ENCODE measurements at regions of chr2 and their contacts with region 1.

Region 1: GRCh38 chr2:219160186-219161017 is at the start of gene NHEJ1:
- DNase-seq: peak; percentile 96
- ATAC-seq: peak; percentile 87
- H3K4me3 Mint-ChIP-seq: peak within 1 kb of the TSS; percentile 80
- H3K27ac Mint-ChIP-seq: peak within 1 kb of the TSS; percentile 93
- H3K4me1 Mint-ChIP-seq: peaks cover 19% of the 10 kb centered on the region
- H3K27me3 Mint-ChIP-seq: no peaks in the 10 kb centered on the region
- total RNA-seq, gene NHEJ1: 14.4 to 19.4 TPM

Region 2: GRCh38 chr2:219177552-219178376 is 17.4 kb after region 1 on chr2 and contains the start of gene RETREG2:
- CTCF ChIA-PET with region 1: interaction called, 75 read pairs
- DNase-seq: peak; percentile 86
- ATAC-seq: peak; percentile 54
- H3K4me3 Mint-ChIP-seq: peak within 1 kb of the TSS; percentile 79
- H3K27ac Mint-ChIP-seq: peak within 1 kb of the TSS; percentile 99
- H3K4me1 Mint-ChIP-seq: peaks cover 66% of the 10 kb centered on the region
- H3K27me3 Mint-ChIP-seq: no peaks in the 10 kb centered on the region
- total RNA-seq, gene RETREG2: 95.8 to 110 TPM

Region 3: GRCh38 chr2:219218732-219219701 is 58.6 kb after region 1 on chr2 and contains the start of gene ABCB6:
- CTCF ChIA-PET with region 1: interaction called, 92 read pairs
- DNase-seq: peak; percentile 89
- ATAC-seq: peak; percentile 78
- H3K4me3 Mint-ChIP-seq: peak within 1 kb of the TSS; percentile 76
- H3K27ac Mint-ChIP-seq: peak within 1 kb of the TSS; percentile 72
- H3K4me1 Mint-ChIP-seq: peaks cover 25% of the 10 kb centered on the region
- H3K27me3 Mint-ChIP-seq: no peaks in the 10 kb centered on the region
- total RNA-seq, gene ABCB6: 12.6 to 15.2 TPM

Region 4: GRCh38 chr2:219245148-219245898 is 84.9 kb after region 1 on chr2 and contains the starts of genes GLB1L and STK16:
- CTCF ChIA-PET with region 1: interaction called, 10 read pairs
- DNase-seq: peak; percentile 94
- ATAC-seq: peak; percentile 75
- H3K4me3 Mint-ChIP-seq: peak within 1 kb of the TSS; percentile 99
- H3K27ac Mint-ChIP-seq: peak within 1 kb of the TSS; percentile 100
- H3K4me1 Mint-ChIP-seq: peaks cover 61% of the 10 kb centered on the region
- H3K27me3 Mint-ChIP-seq: no peaks in the 10 kb centered on the region
- total RNA-seq, gene GLB1L: 4.3 to 4.9 TPM
- total RNA-seq, gene STK16: 37.3 to 41.7 TPM

Measured in activated CD8-positive, alpha-beta memory T cell treated with anti-CD3 and anti-CD28 coated beads, Interleukin-2, amount 10 ng/mL, durations not matched to agents 7 days and 5 days (primary cell).